Dendritic cell treated with granulocyte-macrophage colony-stimulating factor and Interleukin-4, amounts not matched to agents 40 ng/mL and 50 ng/mL, for 4 days (primary cell): ENCODE measurements at regions of chr21 and their contacts with region 1.

Region 1: DNA sequence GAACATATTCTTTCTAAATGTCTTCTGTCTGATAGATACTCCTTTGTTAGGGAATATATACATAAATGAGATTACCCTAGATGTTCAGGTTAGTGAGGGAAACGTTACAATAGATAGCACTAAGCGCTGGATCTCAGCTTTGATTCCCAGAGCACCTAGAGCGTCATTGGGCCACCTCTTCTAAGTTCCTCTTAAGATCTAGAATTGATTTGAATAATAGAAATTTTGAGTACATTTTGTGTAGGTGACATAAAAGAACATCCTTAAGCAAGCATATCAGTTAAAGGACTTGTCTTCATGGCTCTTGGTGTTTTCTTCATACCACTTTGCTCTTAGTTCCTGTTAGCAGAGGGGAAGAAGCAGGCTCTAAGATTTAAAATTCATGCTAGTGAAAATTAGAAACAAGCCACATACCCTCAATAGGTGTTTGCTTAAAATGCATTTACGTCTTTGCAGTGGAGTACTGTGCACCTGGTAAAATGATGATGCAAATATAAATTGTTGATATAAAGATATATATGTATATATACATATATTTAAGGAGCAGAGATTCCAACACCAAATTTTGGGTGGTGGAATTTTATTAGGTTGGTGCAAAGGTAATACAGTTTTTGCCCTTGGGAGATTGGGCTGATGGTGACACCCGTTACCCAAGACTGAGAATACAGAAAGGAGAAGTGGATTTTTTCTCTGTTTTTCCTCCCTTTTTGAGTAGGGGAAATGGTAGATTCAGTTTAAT is 47.1 kb downstream of the DYRK1A start:
- H3K4me3 Mint-ChIP-seq: no peak overlapping the region
- H3K27ac Mint-ChIP-seq: no peak overlapping the region
- H3K4me1 Mint-ChIP-seq: peaks cover 57% of the 10 kb centered on the region
- H3K27me3 Mint-ChIP-seq: no peaks in the 10 kb centered on the region

Region 2: DNA sequence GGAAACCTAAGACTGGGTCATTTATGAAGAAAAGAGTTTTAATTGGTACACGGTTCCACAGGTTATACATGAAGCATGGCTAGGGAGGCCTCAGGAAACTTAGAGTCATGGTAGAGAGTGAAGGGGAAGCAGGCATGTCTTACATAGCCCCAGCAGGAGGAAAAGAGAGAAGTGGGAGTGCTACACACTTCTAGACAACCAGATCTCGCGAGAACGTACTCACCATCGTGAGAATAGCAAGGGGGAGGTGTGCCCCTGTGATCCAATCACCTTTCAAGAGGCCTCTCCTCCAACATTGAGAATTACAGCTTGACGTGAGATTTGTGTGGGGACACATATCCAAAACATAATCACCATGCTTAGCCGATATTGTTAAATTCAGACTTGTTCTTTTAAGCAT is 15.6 kb after region 1 on chr21:
- intact Hi-C with region 1: loop called (anchors 2 kb)
- H3K4me3 Mint-ChIP-seq: no peak overlapping the region
- H3K27ac Mint-ChIP-seq: peak overlapping the region; percentile 48
- H3K4me1 Mint-ChIP-seq: peaks cover 40% of the 10 kb centered on the region
- H3K27me3 Mint-ChIP-seq: no peaks in the 10 kb centered on the region

Region 3: GRCh38 chr21:37503848-37504467 is 90.2 kb after region 1 on chr21:
- intact Hi-C with region 1: no loop called
- H3K4me3 Mint-ChIP-seq: no peak overlapping the region
- H3K27ac Mint-ChIP-seq: peak overlapping the region; percentile 40
- H3K4me1 Mint-ChIP-seq: no peaks in the 10 kb centered on the region
- H3K27me3 Mint-ChIP-seq: no peaks in the 10 kb centered on the region